ENCODE measurements at regions of chr15 and their contacts with region 1.

Region 1: GRCh38 chr15:84570164-84570735 is 30.6 kb upstream of the ZSCAN2 start:
- DNase-seq: no peak
- H3K4me3 ChIP-seq: peak overlapping the region; percentile 60 to 87 (median 68)
- H3K27ac ChIP-seq: 0 out of 2 replicates have a peak overlapping the region, but pooled peaks have one; percentile 4
- H3K4me1 ChIP-seq: peaks cover 0 to 3% (median 0%) of the 10 kb centered on the region in 4 experiments; a peak in 1 of 7 replicates
- H3K27me3 ChIP-seq: peaks cover 0 to 3% (median 0%) of the 10 kb centered on the region in 4 experiments; a peak in 1 of 7 replicates
- CTCF ChIP-seq: no peak
- EP300 ChIP-seq: no peak
- POLR2A ChIP-seq: no peak
- RAD21 ChIP-seq: no peak

Region 2: GRCh38 chr15:84582583-84583157 is 12.4 kb after region 1 on chr15:
- CTCF ChIA-PET with region 1: interaction called, 11 read pairs
- POLR2A ChIA-PET with region 1: interaction called, 4 read pairs
- DNase-seq: no peak
- H3K4me3 ChIP-seq: no peak overlapping the region
- H3K27ac ChIP-seq: no peak overlapping the region
- H3K4me1 ChIP-seq: peaks cover 0 to 5% (median 0%) of the 10 kb centered on the region in 4 experiments; a peak in 2 of 7 replicates
- H3K27me3 ChIP-seq: no peaks in the 10 kb centered on the region
- CTCF ChIP-seq: no peak
- EP300 ChIP-seq: no peak
- POLR2A ChIP-seq: no peak
- RAD21 ChIP-seq: no peak

Region 3: DNA sequence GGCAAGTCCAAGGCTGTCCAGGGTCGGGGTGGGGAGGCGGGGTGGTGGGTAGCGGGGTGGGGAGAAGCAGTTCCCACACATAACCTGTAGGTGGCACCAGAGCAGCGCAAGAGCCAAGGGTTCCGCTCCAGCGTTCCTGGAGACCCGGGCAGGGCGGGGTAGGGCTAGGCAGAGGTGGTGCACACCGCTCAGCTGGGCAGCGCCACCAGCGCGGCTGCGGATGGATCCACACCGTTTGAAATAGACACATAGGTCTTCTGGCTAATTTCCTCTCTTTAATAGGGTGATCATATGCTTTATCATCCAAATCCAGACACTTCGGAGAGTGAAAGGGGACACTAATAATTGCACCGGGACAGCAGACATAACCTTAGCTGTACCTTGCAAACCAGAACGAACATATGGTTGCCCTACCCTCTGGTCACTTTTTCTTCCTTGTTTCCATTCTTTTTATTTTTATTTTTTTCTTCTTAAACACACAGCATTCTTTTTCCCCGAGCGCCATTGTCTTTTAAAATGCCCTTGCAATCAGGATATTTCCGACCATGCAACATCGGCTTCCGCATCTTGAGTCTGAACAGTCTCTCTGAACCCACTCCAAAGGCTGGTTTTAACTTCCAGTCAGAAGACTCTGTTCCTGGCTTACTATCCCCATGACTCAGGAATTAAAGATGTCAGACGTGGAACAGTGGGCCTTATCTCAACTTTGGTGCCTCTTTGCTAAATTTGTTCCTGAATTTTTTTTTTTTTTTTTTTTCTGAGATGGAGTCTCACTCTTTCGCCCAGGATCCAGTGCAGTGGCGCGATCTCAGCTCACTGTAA is 18.0 kb after region 1 on chr15:
- CTCF ChIA-PET with region 1: interaction called, 11 read pairs
- POLR2A ChIA-PET with region 1: interaction called, 4 read pairs
- DNase-seq: peak; percentile 70 to 94
- H3K4me3 ChIP-seq: peak overlapping the region in 2 of 4 experiments; percentile 10 to 46; a peak in 4 of 8 replicates
- H3K27ac ChIP-seq: no peak overlapping the region
- H3K4me1 ChIP-seq: peaks cover 0 to 11% (median 0%) of the 10 kb centered on the region in 4 experiments; a peak in 2 of 7 replicates
- H3K27me3 ChIP-seq: no peaks in the 10 kb centered on the region
- CTCF ChIP-seq: peak; percentile 67 to 87 (median 82)
- EP300 ChIP-seq: no peak
- POLR2A ChIP-seq: no peak
- RAD21 ChIP-seq: peak; percentile 86 to 87

Region 4: GRCh38 chr15:84621358-84621979 is 51.2 kb after region 1 on chr15:
- CTCF ChIA-PET with region 1: interaction called, 10 read pairs
- POLR2A ChIA-PET with region 1: interaction called, 3 read pairs
- DNase-seq: no peak
- H3K4me3 ChIP-seq: peak overlapping the region in 1 of 4 experiments; percentile 2; a peak in 2 of 8 replicates
- H3K27ac ChIP-seq: no peak overlapping the region
- H3K4me1 ChIP-seq: no peaks in the 10 kb centered on the region
- H3K27me3 ChIP-seq: no peaks in the 10 kb centered on the region; a peak in 1 of 7 replicates
- CTCF ChIP-seq: no peak
- EP300 ChIP-seq: no peak
- POLR2A ChIP-seq: no peak
- RAD21 ChIP-seq: no peak